ENCODE measurements at regions of chr7 and their contacts with region 1.

Region 1: DNA sequence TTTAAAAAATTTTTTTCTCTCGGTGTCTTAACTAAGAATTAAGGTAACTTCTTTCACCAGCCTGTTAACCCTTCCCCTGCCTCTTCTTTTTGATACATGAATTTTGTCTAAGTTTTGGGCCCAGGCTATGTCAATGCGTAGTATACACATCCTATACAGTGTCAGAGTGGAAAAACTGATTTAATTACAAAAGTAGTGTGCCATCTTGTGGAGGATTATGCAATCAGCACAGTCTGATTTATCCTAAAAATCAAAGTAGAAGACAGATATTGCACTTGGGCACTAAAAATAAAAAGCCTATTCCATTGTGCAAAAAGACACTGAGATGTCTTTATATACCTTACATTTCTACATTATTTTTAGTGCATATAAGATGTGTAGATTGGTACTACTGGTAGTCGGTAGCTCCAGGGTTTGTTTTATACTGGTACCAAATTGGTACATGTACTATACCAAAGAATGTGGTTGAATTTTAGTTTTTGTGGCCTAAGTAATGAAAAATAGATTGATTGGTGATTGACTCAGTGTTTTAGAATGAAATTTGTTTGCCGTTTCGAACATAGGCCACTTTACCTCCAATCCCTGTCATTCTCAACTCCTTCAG is 96.6 kb downstream of the MKLN1 start:
- DNase-seq: no peak
- H3K4me3 ChIP-seq: no peak overlapping the region
- H3K27ac ChIP-seq: no peak overlapping the region
- H3K4me1 ChIP-seq: peaks cover 0 to 27% (median 6%) of the 10 kb centered on the region in 6 donors
- H3K27me3 ChIP-seq: no peaks in the 10 kb centered on the region
- CTCF ChIP-seq: peak; percentile 37 to 72 (median 63)
- POLR2A ChIP-seq: no peak

Region 2: GRCh38 chr7:131071786-131072504 is 352.4 kb before region 1 on chr7:
- intact Hi-C with region 1: loop called (anchors 10 kb)
- DNase-seq: no peak
- H3K4me3 ChIP-seq: peak overlapping the region in 2 of 8 donors; percentile 9 to 23
- H3K27ac ChIP-seq: peak overlapping the region; percentile 57 to 83 (median 75)
- H3K4me1 ChIP-seq: peaks cover 40 to 98% (median 90%) of the 10 kb centered on the region in 6 donors
- H3K27me3 ChIP-seq: no peaks in the 10 kb centered on the region
- CTCF ChIP-seq: peak in 7 of 11 experiments; percentile 38 to 58 (median 50)
- POLR2A ChIP-seq: peak in 1 of 3 donors; percentile 42

Measured in spleen (tissue), 13 donors.